AG04449 (cell line): ENCODE measurements at regions of chr6 and their contacts with region 1.

Region 1: DNA sequence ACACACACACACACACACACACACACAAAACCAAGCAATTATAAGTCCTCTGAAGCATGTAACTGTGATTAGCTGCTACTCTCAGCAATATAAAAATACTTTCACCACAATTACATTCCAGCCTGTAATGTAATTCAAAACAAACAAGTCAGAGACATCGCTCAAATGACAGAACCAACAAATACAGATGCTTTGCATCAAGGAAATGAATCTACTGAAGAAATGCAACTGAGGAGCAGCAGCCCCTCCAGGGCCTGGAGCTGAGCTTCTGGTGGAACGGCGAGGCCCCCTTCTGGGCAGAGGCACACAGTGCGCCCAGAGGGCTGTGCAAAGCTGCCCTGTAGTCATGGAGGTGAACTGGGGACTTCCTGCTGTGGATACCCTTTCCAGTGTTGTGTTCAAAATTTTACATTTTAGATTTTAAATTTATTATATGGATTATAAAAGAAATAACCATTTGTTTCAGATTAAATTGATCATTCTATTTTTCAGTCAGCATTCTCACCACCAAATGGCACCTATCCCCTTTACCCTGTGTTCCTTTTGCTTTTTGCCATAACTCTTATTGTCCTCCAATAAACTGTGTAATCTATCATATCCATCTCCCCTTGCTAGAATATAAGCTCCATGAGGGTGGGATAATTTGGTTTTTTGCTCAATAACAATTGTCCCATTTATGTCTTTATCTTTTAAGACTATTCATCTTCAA is 23.2 kb downstream of the ADAT2 start:
- DNase-seq: peak; percentile 80
- H3K4me3 ChIP-seq: no peak overlapping the region
- CTCF ChIP-seq: peak; percentile 99

Region 2: GRCh38 chr6:142566628-142567396 is 860.5 kb before region 1 on chr6:
- CTCF ChIA-PET with region 1: interaction called, 49 read pairs
- POLR2A ChIA-PET with region 1: no interaction called
- DNase-seq: no peak
- H3K4me3 ChIP-seq: no peak overlapping the region
- CTCF ChIP-seq: peak; percentile 85

Region 3: DNA sequence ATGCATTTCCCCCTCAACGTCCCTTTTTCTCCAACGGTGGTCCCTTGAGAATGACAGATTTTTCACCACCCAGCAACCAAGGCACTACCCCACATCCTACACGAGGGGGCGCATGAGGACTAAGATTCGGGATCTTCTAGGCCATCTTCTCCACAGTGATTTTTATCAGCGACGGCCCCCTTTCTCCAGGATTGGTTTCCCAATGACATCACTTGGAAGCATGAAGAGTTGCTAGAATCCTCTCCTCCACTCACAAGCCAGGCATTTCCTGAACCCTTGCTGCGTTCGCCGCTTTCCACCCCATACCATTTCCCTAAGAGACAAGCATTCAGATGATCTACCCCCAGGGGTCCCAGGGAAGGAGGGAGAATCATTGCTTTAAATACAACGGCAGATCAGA is 734.3 kb before region 1 on chr6:
- CTCF ChIA-PET with region 1: interaction called, 88 read pairs
- POLR2A ChIA-PET with region 1: no interaction called
- DNase-seq: peak; percentile 79
- H3K4me3 ChIP-seq: peak overlapping the region; percentile 31
- CTCF ChIP-seq: peak; percentile 87

Region 4: DNA sequence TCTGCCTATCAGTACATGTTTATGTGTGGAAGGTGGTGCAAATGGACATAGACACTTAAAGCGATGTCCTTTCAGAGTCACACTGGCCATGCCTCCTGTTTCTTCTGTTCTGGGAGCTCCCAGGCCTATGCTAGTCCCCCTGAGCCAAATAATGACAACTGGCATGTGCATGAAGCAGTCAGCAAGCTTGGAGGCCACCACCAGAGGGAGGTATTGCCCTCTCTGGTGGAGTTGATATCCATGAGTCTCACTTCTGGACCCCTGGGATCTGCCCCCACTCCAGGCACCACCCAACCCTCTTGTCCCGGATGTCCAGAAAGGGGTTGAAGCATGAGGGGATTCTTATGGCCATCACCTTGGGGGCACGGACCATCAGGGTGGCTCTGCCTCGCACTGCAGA is 194.4 kb before region 1 on chr6:
- CTCF ChIA-PET with region 1: interaction called, 14 read pairs
- POLR2A ChIA-PET with region 1: no interaction called
- DNase-seq: no peak
- H3K4me3 ChIP-seq: no peak overlapping the region
- CTCF ChIP-seq: peak; percentile 48

Region 5: GRCh38 chr6:143368426-143368825 is 58.8 kb before region 1 on chr6:
- CTCF ChIA-PET with region 1: no interaction called
- POLR2A ChIA-PET with region 1: no interaction called
- DNase-seq: no peak
- H3K4me3 ChIP-seq: no peak overlapping the region
- CTCF ChIP-seq: no peak

Region 6: DNA sequence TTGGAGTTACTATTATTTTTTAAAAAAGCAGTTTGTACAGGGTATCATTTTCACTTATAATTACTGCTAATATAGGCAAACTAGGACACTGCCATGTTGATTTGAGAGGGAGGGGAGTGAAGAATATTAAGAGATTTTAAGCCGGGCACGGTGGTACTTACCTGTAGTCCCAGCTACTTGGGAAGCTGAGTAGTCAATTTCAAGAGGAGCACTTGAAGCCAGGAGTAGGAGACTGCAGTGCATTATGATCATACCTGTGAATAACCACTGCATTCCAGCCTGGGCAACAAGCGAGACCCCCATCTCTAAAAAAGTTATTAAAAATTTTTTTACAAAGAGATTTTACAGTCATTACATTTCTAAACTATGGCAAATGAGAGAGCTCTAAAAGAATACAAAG is 12.5 kb before region 1 on chr6:
- CTCF ChIA-PET with region 1: interaction called, 30 read pairs
- POLR2A ChIA-PET with region 1: interaction called, 3 read pairs
- DNase-seq: no peak
- H3K4me3 ChIP-seq: no peak overlapping the region
- CTCF ChIP-seq: no peak